K562 (cell line): ENCODE measurements at regions of chr3 and their contacts with region 1.

Region 1: DNA sequence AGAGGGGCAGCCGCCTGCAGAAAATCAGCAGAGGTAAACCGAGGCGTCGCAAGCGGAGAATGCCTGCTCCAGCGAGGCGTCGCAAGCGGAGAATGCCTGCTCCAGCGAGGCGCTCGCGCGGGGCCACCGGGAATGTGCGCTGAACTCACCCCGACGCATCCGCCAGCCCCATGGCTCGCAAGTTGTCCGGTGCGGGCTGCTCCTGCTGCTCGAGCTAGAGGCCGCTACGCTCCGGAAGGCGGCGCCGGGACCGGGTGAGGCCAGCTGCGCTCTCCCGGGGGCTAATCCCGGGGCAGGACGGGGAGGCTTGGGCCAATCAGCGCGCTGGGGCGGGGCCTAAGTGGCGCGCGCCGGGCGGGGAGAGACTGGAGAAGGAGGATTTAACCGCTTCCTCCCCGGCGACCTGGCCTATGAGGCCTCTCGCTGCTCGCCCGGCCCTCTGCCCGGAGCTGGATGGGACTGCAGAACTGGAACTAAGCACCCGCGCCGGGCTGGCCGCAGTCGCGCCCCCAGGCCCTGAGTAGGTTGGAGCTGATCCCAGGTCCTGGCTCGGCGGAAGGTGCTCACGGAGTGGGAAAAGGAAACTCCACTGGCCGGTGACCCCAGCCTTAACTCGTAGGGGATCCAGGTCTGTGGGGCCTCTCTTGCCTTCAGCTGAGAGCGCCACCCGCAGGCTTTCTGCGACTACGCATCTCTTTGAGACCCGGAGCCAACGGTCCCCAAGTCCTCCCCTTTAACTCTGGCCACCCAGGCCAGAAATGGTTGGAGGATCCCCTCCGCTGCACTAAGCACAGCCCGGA is at the start of gene SLC26A6:
- DNase-seq: peak; percentile 96 to 99 (median 96)
- ATAC-seq: peak; percentile 98
- H3K4me3 ChIP-seq: peak within 1 kb of the TSS; percentile 91
- H3K27ac ChIP-seq: peak within 1 kb of the TSS; percentile 65
- H3K4me1 ChIP-seq: peaks cover 6 to 44% of the 10 kb centered on the region in 2 experiments; a peak in 4 of 5 replicates
- H3K27me3 ChIP-seq: no peaks in the 10 kb centered on the region
- CTCF ChIP-seq: peak; percentile 65 to 78 (median 70)
- EP300 ChIP-seq: no peak
- POLR2A ChIP-seq: peak; percentile 73
- RAD21 ChIP-seq: peak in 1 of 2 experiments; percentile 59; a peak in 2 of 4 replicates
- polyA plus RNA-seq, gene SLC26A6: 2.1 to 4.5 TPM

Region 2: DNA sequence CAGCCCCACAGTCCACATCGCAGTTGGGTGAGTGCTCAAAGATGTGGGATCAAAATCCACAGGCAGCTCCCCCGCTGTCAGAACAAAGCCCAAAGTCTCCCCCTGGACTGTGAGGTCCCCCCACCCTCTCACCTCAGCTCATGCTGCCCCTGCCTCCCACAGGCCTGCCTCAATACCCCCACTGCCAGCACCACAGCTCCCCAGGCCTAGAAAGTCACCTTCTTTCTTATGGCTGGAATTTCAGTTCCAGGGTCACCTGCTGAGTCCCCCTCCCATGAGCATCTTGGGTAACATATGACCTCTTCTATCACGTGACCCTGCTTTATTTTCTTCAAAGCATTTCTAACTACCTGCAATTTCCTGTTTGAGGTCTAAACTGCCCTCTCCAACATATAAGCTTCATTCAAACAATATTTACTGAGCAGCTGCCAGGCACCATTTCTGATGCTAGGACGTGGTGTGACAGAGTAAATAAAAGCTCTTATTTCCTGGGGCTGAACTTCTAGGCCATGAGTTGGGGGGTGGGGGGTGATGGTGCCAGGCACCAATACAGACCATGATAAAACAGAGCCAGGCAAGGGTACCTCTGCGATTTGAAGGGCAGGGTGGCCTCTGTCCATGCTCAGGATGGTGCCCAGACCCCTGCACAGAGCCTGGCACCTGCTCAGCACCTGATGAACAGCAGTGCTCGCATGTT is 11.4 kb before region 1 on chr3:
- CTCF ChIA-PET with region 1: no interaction called
- POLR2A ChIA-PET with region 1: interaction called, 23 read pairs
- in situ Hi-C with region 1: no loop called
- intact Hi-C with region 1: no loop called
- DNase-seq: no peak
- ATAC-seq: no peak
- H3K4me3 ChIP-seq: no peak overlapping the region
- H3K27ac ChIP-seq: no peak overlapping the region
- H3K4me1 ChIP-seq: peaks cover 0 to 7% of the 10 kb centered on the region in 2 experiments; a peak in 2 of 5 replicates
- H3K27me3 ChIP-seq: no peaks in the 10 kb centered on the region
- CTCF ChIP-seq: no peak
- EP300 ChIP-seq: no peak
- POLR2A ChIP-seq: no peak
- RAD21 ChIP-seq: no peak